Panc1 (cell line): ENCODE measurements at regions of chr17 and their contacts with region 1.

Region 1: GRCh38 chr17:61144741-61145564 is 254.7 kb upstream of the TBX2 start:
- DNase-seq: no peak
- ATAC-seq: no peak
- H3K4me3 ChIP-seq: no peak overlapping the region
- H3K27ac ChIP-seq: peak overlapping the region; percentile 32
- H3K4me1 ChIP-seq: peaks cover 16% of the 10 kb centered on the region
- H3K27me3 ChIP-seq: no peaks in the 10 kb centered on the region
- CTCF ChIP-seq: no peak

Region 2: DNA sequence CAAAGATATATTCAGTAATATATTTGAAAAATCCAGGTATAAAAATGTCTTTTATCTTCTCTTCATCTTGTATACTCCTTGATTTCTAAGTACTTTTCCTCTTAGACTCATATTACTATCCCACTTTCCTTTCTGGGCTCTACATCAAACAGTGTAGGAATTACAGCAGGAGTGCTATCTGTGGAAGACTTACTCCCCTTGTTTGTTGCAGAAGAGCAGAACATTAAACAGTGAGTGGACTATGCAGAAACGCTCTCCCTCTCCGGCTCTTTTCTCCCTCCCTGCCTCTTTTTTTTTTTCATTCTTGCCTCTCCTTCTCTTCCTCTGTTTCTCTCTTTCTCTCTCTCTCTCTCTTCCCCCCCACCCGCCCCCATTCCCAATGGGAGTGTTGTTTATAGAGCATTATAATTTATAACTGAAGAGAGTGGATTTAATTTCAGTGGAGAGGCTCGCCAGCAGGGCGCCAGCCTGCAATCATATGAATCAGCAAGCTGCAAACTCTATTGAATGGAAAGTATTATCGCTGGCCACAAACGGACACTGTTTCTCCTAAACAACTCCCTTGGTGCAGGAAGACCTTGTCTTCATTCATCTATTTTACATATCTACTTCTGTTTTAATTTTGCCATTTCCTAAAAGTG is 12.4 kb after region 1 on chr17:
- CTCF ChIA-PET with region 1: no interaction called
- POLR2A ChIA-PET with region 1: interaction called, 35 read pairs
- in situ Hi-C with region 1: no loop called
- intact Hi-C with region 1: no loop called
- DNase-seq: no peak
- ATAC-seq: peak; percentile 96
- H3K4me3 ChIP-seq: peak overlapping the region; percentile 30 to 38
- H3K27ac ChIP-seq: peak overlapping the region; percentile 98
- H3K4me1 ChIP-seq: peaks cover 40% of the 10 kb centered on the region
- H3K27me3 ChIP-seq: no peaks in the 10 kb centered on the region
- CTCF ChIP-seq: peak; percentile 16

Region 3: DNA sequence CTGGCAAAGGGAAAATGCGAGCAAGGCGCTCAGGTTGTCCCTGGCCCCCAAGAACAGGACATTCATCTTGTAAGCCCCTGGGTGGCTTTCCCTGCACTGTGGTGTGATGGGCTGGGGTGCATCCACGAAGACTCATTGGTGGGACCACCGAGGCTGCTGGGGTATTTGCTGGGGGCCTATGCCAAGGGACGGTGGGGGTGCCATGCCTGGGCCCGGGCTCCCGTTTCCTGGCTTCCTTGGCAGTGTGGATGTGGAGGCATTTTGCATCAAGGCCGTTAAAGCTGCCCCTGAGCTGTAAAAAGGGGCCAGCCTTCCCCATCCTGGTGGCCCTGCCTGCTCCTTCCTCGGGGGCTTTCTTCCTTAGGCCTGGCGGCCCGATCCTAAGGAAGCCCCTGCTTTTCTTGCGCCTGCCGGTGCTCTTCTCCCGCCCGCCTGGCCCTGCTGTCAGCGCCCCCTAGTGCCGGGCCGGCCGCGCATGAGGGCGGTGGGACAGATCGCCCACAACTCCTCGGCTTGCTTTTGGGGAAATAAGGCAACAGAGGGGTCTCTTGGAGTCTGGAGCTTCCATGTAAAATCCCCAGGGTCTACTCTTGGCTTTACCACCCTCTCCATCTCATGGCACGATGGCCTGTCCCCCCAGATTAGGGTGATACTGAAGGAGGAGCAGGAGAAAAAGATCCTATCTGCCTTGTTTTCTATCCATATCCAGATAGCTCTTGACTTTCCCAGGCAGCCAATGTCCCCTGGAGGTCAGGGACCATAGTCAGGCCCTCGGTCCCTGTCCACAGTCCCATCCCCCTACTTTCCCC is 244.9 kb after region 1 on chr17:
- CTCF ChIA-PET with region 1: no interaction called
- POLR2A ChIA-PET with region 1: interaction called, 15 read pairs
- in situ Hi-C with region 1: no loop called
- intact Hi-C with region 1: no loop called
- DNase-seq: no peak
- ATAC-seq: peak; percentile 73
- H3K4me3 ChIP-seq: no peak overlapping the region
- H3K27ac ChIP-seq: peak overlapping the region; percentile 70
- H3K4me1 ChIP-seq: peaks cover 42% of the 10 kb centered on the region
- H3K27me3 ChIP-seq: no peaks in the 10 kb centered on the region
- CTCF ChIP-seq: peak; percentile 99